ENCODE measurements at regions of chr7 and their contacts with region 1.

Region 1: GRCh38 chr7:143002106-143002505 is 24.8 kb downstream of the OR9A2 start:
- H3K4me3 Mint-ChIP-seq: no peak overlapping the region
- H3K27ac Mint-ChIP-seq: no peak overlapping the region
- H3K4me1 Mint-ChIP-seq: peaks cover 6% of the 10 kb centered on the region
- H3K27me3 Mint-ChIP-seq: no peaks in the 10 kb centered on the region

Region 2: GRCh38 chr7:142853739-142854371 is 148.3 kb before region 1 on chr7:
- intact Hi-C with region 1: loop called (anchors 1 kb)
- H3K4me3 Mint-ChIP-seq: peak overlapping the region; percentile 84
- H3K27ac Mint-ChIP-seq: peak overlapping the region; percentile 88
- H3K4me1 Mint-ChIP-seq: peaks cover 28% of the 10 kb centered on the region
- H3K27me3 Mint-ChIP-seq: peaks cover 8% of the 10 kb centered on the region

Region 3: DNA sequence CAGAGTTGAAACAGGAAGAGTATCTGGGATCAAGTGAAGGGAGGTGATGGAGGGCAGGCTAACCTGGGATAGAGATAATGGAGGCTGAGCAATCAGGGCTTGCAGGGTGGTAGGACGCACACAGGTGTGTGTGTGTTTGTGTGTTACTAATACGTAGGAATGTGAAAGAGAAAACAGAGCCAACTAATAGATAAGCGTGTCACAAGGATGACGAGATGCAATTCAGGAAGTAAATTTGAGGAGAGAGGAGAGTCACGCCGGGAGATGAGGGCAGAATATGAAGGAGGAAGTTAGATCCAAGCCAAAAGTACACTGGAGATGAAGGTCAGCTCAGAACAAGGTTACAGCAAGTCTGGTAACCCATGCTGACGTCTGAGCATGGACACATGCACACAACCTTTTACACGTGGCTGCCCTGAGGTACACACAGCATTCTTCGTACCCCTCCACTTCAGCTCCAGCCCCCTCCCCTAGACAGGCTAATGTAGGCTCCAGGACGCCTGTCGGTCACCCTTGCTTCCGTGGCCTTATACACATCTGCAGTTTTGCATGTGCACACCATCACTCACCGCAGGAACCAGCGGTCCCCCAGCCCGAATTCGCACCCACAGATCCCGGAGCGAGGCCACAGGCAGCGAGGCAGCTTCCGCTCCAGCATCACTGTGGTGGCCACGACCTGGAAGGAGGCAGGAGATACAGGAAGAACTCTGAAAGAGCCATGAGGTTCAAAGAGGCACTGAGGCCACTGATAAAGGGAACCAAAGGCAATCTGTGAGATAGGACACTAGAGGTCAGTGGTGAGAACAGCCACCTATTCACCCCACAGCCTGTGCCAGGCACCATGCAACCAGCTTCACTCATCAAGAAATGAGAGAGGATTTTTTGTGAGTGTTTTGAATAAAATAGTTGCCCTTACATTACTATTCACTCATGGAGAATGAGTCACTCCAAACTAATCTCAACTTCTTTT is 92.9 kb before region 1 on chr7:
- intact Hi-C with region 1: loop called (anchors 1 kb)
- H3K4me3 Mint-ChIP-seq: no peak overlapping the region
- H3K27ac Mint-ChIP-seq: peak overlapping the region; percentile 74
- H3K4me1 Mint-ChIP-seq: peaks cover 40% of the 10 kb centered on the region
- H3K27me3 Mint-ChIP-seq: peaks cover 2% of the 10 kb centered on the region

Measured in dendritic cell treated with granulocyte-macrophage colony-stimulating factor and Interleukin-4, amounts not matched to agents 40 ng/mL and 50 ng/mL, for 4 days (primary cell).